Calu3 (cell line): ENCODE measurements at regions of chr1 and their contacts with region 1.

Region 1: DNA sequence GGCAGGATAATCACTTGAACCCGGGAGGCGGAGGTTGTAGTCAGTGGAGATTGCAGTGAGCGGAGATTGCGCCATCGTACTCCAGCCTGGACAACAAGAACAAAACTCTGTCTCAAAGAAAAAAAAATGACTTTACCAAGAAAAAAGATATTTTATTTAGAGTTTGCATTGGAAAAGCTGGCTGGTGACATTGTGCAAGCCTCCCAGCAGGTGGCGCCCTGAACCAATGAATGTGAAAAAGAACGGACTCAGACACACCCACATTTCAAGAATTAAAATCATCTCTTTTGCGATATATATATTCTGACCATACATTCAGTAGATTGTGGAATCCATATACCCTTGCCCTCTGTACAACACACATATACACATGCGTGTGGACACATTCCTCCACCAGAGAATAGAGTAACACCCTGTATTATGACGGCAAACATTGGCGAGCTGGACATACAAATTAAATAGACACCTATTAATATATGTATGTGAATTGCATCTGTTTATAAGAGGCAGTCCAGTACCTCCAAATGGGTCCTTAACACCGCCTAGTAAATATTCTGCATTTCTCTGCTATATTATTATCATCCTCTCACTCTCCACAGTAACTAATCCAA is 39.0 kb upstream of the CADM3 start:
- DNase-seq: peak; percentile 85
- H3K4me3 Mint-ChIP-seq: no peak overlapping the region
- H3K27ac Mint-ChIP-seq: no peak overlapping the region
- H3K4me1 Mint-ChIP-seq: no peaks in the 10 kb centered on the region
- H3K27me3 Mint-ChIP-seq: no peaks in the 10 kb centered on the region
- CTCF ChIP-seq: peak; percentile 89

Region 2: GRCh38 chr1:159197561-159198557 is 65.5 kb after region 1 on chr1:
- CTCF ChIA-PET with region 1: interaction called, 16 read pairs
- intact Hi-C with region 1: loop called (anchors 1 kb)
- DNase-seq: peak; percentile 82
- H3K4me3 Mint-ChIP-seq: no peak overlapping the region
- H3K27ac Mint-ChIP-seq: no peak overlapping the region
- H3K4me1 Mint-ChIP-seq: no peaks in the 10 kb centered on the region
- H3K27me3 Mint-ChIP-seq: peaks cover 93% of the 10 kb centered on the region
- CTCF ChIP-seq: peak; percentile 84

Region 3: GRCh38 chr1:159334797-159335196 is 202.4 kb after region 1 on chr1:
- CTCF ChIA-PET with region 1: no interaction called
- intact Hi-C with region 1: no loop called
- DNase-seq: no peak
- H3K4me3 Mint-ChIP-seq: no peak overlapping the region
- H3K27ac Mint-ChIP-seq: no peak overlapping the region
- H3K4me1 Mint-ChIP-seq: no peaks in the 10 kb centered on the region
- H3K27me3 Mint-ChIP-seq: no peaks in the 10 kb centered on the region
- CTCF ChIP-seq: no peak

Region 4: GRCh38 chr1:159798893-159799292 is 666.5 kb after region 1 on chr1:
- CTCF ChIA-PET with region 1: interaction called, 5 read pairs
- intact Hi-C with region 1: loop called (anchors 10 kb)
- DNase-seq: peak; percentile 71
- H3K4me3 Mint-ChIP-seq: no peak overlapping the region
- H3K27ac Mint-ChIP-seq: no peak overlapping the region
- H3K4me1 Mint-ChIP-seq: no peaks in the 10 kb centered on the region
- H3K27me3 Mint-ChIP-seq: peaks cover 40% of the 10 kb centered on the region
- CTCF ChIP-seq: peak; percentile 64

Region 5: GRCh38 chr1:160284782-160285344 is 1152.5 kb after region 1 on chr1 and contains the start of gene PEX19:
- CTCF ChIA-PET with region 1: no interaction called
- intact Hi-C with region 1: loop called (anchors 5 kb)
- DNase-seq: peak; percentile 97
- H3K4me3 Mint-ChIP-seq: peak within 1 kb of the TSS; percentile 89
- H3K27ac Mint-ChIP-seq: peak within 1 kb of the TSS; percentile 95
- H3K4me1 Mint-ChIP-seq: peaks cover 17% of the 10 kb centered on the region
- H3K27me3 Mint-ChIP-seq: no peaks in the 10 kb centered on the region
- CTCF ChIP-seq: no peak
- total RNA-seq, gene PEX19: 64.0 and 70.3 TPM in 2 replicates